GM23248 (cell line): ENCODE measurements at regions of chr21 and their contacts with region 1.

Region 1: DNA sequence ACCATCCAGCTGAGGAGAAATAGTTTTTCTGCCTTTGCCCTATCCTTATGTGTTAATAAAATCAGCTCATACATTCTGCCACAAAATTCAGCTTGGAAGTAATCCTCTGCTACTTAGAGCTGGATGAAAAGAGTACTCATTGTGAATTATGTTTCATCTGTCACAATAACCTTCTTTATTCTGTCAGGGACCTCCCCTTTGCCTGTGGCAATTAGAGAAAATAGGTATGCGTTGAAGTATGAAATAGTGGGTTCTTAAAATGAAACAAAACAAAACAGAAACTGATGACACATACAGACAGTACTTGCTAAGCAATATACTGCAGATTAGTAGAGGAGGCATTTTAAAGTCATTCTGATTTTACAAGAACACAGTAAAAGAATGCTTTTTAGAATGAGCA is 578.5 kb downstream of the USP25 start:
- DNase-seq: peak; percentile 58
- H3K4me3 ChIP-seq: peak overlapping the region; percentile 74
- H3K27ac ChIP-seq: peak overlapping the region; percentile 64
- H3K4me1 ChIP-seq: peaks cover 19% of the 10 kb centered on the region
- H3K27me3 ChIP-seq: no peaks in the 10 kb centered on the region

Region 2: DNA sequence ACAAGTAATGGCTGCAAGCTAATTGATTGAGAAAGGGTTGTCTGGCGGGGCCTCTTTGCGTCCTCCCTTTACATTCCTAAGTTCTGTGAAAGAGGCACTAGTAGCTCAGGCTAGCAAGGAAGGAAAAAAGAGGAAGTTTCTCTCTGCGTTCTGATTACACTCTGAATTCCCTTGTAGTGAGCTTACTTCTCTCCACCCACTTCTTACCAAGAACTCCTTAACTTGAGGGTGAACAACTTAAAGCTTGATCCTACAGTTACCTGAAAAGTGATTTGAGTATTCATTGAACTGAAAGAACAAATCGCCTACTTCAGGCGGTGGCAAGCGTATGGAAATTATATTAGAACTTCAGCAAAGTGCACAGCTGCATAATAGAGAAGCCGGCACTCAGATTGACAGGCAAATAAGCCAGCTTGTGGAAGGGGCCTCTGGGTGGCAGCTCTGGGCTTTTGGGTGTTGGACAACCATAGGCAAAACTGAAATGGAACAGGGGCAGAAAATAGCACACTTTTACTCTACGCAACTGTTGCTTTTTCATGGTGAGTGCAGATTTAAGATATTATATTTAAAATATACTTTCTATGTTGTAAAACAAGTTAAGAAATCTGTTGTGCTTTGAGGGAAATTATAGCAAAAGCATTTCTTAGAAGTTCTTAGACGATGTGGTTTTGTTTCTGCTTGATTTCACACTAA is 114.0 kb before region 1 on chr21:
- in situ Hi-C with region 1: loop called (anchors 10 kb)
- DNase-seq: peak; percentile 86
- H3K4me3 ChIP-seq: peak overlapping the region; percentile 82
- H3K27ac ChIP-seq: peak overlapping the region; percentile 92
- H3K4me1 ChIP-seq: peaks cover 24% of the 10 kb centered on the region
- H3K27me3 ChIP-seq: no peaks in the 10 kb centered on the region